GM10248 (cell line): ENCODE measurements at regions of chr5 and their contacts with region 1.

Region 1: GRCh38 chr5:126776497-126777256 is at the start of gene LMNB1:
- DNase-seq: peak; percentile 93
- CTCF ChIP-seq: no peak

Region 2: DNA sequence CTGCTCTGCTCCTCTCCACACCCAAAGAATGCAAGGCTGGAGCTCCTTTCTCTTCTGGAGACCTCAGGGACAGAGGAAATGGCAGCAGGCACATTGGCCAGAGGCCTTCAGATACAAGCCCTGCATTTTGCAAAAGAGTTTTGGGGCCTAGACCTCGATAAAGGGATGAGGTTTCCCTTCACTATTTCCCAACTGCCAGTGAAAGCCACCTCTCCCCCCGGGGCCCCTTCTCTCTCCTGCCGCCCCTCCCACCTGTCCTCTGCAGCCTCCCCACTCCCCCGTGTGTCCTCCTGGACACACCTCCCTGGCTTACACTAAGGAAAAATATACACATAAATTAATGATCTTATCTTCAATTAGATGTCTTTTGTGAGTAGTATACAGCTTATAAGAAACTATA is 21.1 kb before region 1 on chr5:
- CTCF ChIA-PET with region 1: interaction called, 49 read pairs
- POLR2A ChIA-PET with region 1: interaction called, 17 read pairs
- DNase-seq: no peak
- CTCF ChIP-seq: no peak

Region 3: DNA sequence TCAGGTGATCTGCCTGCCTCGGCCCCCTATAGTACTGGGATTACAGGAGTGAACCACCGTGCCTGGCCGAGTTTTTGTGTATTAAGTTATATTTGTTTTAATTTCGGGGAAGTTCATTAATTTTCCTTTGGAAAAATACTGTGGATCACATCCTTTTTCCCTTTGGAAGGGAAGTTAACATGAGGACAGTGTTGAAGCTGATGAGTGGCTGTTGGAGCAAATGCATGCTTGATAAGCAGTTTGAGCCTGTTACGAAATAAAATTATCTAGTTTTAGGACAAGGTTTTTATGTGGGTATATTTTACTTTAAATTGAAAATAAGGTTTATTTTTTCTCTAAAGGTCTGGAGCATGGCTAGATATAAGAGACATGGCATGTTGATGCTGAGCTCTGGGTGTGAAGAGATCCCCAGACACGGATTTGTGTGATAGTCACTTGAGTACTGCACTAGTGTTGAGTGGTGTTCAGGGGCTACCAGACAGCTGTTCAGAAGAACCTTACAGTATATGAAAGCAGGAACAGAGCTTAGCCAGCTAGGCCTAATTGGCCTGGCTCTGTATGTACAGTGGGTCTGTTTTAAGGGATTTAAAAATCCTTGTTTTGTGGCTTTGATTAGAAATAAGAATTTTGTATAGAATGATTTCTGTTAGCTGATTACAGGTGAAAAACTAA is 17.6 kb after region 1 on chr5:
- CTCF ChIA-PET with region 1: interaction called, 92 read pairs
- POLR2A ChIA-PET with region 1: interaction called, 5 read pairs
- DNase-seq: no peak
- CTCF ChIP-seq: no peak

Region 4: DNA sequence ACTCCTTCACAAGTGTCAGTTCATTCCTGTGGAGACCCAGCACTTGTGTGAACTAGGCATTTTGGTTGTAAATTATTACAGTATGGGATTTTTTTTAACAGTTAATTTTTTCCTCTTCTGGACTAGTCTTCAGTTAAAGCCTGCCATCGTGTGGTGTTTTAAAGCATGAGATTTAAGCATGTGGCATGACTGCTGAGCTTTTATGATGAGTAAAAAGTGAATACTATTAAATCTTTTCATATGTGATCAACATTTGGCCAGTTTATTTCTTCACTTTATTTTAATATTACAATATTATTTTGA is 25.3 kb after region 1 on chr5:
- CTCF ChIA-PET with region 1: interaction called, 92 read pairs
- POLR2A ChIA-PET with region 1: interaction called, 4 read pairs
- DNase-seq: peak; percentile 26
- CTCF ChIP-seq: peak; percentile 51

Region 5: DNA sequence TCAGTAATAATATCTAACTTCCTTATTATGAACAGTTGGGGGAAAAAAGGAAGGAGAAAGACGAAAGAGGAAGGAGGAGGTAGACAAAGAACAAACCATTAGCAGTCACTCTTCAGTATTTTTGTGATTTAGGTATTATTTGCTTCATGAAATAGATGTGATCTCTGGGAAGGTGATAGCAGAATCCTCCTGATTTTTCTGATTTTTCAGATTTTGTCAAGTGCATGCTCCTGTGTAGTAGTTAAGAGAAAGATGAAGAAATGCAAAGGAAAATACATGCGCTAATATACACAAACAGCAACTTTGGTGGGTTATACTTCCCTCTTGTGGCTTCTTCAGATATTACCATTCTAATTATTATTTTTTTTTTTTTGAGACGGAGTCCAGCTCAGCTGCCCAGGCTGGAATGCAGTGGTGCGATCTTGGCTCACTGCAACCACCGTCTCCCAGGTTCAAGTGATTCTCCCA is 31.9 kb after region 1 on chr5:
- CTCF ChIA-PET with region 1: interaction called, 69 read pairs
- POLR2A ChIA-PET with region 1: no interaction called
- DNase-seq: peak; percentile 47
- CTCF ChIP-seq: peak; percentile 35